ENCODE measurements at regions of chr5 and their contacts with region 1.

Region 1: DNA sequence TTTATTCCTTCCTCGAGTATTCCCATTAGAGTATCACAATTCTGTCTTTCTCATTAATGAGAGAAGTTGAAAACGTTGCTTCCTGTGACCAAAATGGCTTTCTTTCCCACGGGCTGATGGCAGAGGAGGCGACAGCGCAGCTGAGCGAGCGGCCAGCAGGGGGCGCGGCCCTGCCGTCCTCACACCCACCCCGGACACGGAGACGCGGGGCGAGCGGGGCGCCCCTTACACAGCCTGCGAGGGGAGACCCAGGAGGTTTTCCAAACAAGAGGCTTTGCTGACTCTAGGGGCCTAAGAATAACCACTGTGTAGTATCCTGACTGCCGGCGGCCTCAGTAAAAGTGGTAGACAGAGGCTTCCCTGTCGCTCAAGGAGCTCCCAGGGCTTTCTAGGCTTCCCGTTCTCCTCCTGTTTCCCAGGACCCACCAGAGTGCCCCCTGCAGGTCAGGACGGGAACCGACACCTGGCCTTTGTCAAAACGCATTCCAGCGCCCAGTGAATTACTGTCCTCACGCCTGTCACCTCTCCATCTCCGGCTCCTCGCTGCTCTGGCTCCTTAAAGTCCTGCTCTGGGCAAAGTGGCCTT is 27.3 kb upstream of the FGF1 start:
- DNase-seq: peak; percentile 82 to 89
- ATAC-seq: peak; percentile 93

Region 2: DNA sequence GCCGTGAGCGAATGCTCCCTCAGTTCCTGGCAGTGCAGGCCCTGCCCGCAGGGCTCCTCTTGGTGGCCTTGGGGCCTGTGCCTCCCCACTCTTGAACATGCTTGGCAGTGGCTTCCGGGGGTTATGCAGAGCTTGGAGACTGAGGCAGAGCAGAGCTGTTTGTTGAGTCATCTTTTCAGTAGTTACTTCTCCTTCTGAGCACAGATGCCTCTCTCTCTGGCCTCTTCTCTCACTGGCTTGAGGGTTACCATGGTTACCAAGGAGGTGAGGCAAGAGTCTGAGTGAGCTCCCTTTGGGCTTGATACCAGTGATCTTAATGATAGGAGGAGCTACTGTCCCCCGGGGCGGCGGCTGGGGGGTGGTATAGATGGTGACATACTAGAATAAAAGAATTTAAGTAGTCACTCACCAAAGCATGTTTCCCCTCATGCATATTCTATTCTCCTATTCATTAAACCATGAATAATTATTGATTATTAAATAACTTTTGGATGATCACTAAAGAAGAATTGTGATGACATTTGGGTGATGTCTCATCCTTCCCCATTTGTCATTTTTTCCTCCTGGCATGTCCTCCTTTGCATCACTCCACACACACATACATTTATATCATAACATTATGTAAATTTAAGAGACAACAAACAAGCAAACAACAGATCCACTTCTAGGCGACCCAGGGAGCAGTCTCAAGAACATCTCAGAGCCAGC is 168.0 kb after region 1 on chr5:
- intact Hi-C with region 1: loop called (anchors 5 to 10 kb)
- DNase-seq: no peak
- ATAC-seq: no peak

Region 3: GRCh38 chr5:142888469-142889085 is 175.4 kb after region 1 on chr5:
- intact Hi-C with region 1: loop called (anchors 5 to 10 kb)
- DNase-seq: no peak
- ATAC-seq: peak; percentile 83

Measured in left colon (tissue), 2 donors.